WTC11 (cell line): ENCODE measurements at regions of chr12 and their contacts with region 1.

Region 1: DNA sequence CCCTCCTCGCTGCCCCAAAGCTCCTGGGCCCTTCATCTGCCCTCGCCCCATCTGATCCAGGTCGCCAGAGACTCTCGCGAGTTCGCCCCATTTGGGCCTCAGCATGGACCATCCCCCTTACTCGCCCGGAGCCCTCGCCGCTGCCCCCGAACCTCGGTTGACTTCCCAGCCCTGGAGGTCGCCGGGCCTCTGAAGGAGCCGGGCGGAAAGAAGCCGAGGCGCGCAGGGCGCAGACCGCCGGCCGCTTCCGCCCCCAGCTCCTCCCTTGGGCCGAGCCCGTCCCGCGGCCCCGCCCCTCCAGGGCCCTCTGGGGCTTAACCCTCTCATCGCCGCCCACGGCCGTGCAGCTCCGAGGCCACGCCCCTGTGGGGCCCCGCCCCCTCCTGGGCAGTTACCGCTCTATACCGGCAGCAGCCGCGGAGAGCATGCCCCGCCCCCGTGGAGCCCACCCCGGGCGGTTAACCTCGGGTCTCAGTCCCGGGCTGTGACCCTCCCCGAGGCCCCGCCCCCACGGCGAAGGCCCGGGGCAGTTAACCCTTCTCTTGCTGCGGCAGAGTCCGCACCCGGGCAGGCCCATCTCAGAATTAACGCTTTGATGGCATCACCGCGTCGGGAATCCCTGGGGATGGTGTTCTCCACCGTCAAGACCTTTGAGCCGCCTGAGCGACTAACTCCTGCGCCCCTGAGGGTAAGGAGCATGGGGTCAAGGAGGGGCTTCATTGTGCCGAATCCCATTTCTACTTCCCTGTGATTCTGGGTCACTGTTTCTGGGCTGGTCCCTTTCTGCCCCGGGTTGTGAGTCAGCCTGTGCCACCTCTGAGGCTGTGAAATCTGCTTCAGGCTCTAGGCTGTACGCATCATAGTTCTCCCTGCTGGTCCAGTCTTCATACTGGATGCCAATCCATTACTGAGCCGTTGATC is at the start of gene SPSB2:
- DNase-seq: peak; percentile 100
- ATAC-seq: peak; percentile 75
- H3K4me3 Mint-ChIP-seq: peak within 1 kb of the TSS; percentile 89
- H3K27ac Mint-ChIP-seq: peak within 1 kb of the TSS; percentile 96
- H3K4me1 Mint-ChIP-seq: peaks cover 44% of the 10 kb centered on the region
- H3K27me3 Mint-ChIP-seq: no peaks in the 10 kb centered on the region
- CTCF ChIP-seq: no peak
- total RNA-seq, gene SPSB2: 21.2 to 25.5 TPM (median 22.7 TPM) in 3 replicates

Region 2: GRCh38 chr12:6752921-6753771 is 120.2 kb before region 1 on chr12 and contains the start of gene MLF2:
- CTCF ChIA-PET with region 1: interaction called, 20 read pairs
- POLR2A ChIA-PET with region 1: interaction called, 4 read pairs
- DNase-seq: peak; percentile 99
- ATAC-seq: peak; percentile 95
- H3K4me3 Mint-ChIP-seq: peak within 1 kb of the TSS; percentile 92
- H3K27ac Mint-ChIP-seq: peak within 1 kb of the TSS; percentile 99
- H3K4me1 Mint-ChIP-seq: peaks cover 25% of the 10 kb centered on the region
- H3K27me3 Mint-ChIP-seq: no peaks in the 10 kb centered on the region
- CTCF ChIP-seq: peak; percentile 89; the same call in 1 of the 2 replicates
- total RNA-seq, gene MLF2: 226 to 236 TPM (median 229 TPM) in 3 replicates

Region 3: DNA sequence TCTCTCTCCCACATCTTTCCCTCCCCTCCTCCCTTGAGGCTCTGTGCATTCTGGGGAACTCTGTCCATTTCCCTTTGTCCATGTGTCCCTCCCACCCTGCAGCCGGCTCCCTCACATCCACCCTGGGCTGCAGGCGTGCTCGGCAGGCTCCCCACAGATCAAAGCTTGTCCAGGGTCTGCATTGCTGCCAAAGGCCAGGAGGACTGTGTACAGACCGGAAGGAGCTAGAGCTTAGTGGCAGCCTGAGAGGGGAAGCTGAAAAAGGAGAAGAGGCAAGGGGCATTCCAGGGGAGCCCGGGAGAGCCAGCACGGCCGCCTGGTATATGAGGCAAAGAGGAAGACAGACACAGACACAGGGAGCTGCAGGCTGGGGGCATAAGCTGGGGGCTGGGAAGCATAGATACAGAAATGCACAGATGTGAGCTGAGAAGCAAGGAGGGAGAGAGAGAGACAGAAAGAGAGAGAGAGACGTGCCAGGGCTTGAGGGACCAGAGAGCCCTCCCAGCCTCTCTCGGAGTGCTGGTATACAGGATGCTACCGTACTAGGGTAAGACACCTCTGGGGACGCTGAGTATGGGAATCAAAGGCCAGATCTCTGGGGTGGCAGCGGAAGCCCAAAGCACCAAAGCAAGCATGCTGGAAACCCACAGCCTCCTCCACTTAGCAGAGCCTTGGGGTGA is 80.7 kb before region 1 on chr12:
- CTCF ChIA-PET with region 1: no interaction called
- POLR2A ChIA-PET with region 1: no interaction called
- DNase-seq: no peak
- ATAC-seq: peak; percentile 11; the same call in 1 of the 2 replicates
- H3K4me3 Mint-ChIP-seq: no peak overlapping the region
- H3K27ac Mint-ChIP-seq: no peak overlapping the region
- H3K4me1 Mint-ChIP-seq: peaks cover 16% of the 10 kb centered on the region
- H3K27me3 Mint-ChIP-seq: peaks cover 25% of the 10 kb centered on the region
- CTCF ChIP-seq: no peak

Region 4: GRCh38 chr12:6807170-6807569 is 66.2 kb before region 1 on chr12:
- CTCF ChIA-PET with region 1: no interaction called
- POLR2A ChIA-PET with region 1: no interaction called
- DNase-seq: no peak
- ATAC-seq: no peak
- H3K4me3 Mint-ChIP-seq: no peak overlapping the region
- H3K27ac Mint-ChIP-seq: no peak overlapping the region
- H3K4me1 Mint-ChIP-seq: peaks cover 18% of the 10 kb centered on the region
- H3K27me3 Mint-ChIP-seq: peaks cover 32% of the 10 kb centered on the region
- CTCF ChIP-seq: no peak

Region 5: GRCh38 chr12:6851921-6852650 is 21.3 kb before region 1 on chr12 and contains the start of gene USP5:
- CTCF ChIA-PET with region 1: interaction called, 181 read pairs
- POLR2A ChIA-PET with region 1: interaction called, 33 read pairs
- DNase-seq: peak; percentile 99
- ATAC-seq: peak; percentile 79
- H3K4me3 Mint-ChIP-seq: peak within 1 kb of the TSS; percentile 95
- H3K27ac Mint-ChIP-seq: peak within 1 kb of the TSS; percentile 100
- H3K4me1 Mint-ChIP-seq: peaks cover 19% of the 10 kb centered on the region
- H3K27me3 Mint-ChIP-seq: no peaks in the 10 kb centered on the region
- CTCF ChIP-seq: no peak
- total RNA-seq, gene USP5: 141 to 158 TPM (median 149 TPM) in 3 replicates

Region 6: DNA sequence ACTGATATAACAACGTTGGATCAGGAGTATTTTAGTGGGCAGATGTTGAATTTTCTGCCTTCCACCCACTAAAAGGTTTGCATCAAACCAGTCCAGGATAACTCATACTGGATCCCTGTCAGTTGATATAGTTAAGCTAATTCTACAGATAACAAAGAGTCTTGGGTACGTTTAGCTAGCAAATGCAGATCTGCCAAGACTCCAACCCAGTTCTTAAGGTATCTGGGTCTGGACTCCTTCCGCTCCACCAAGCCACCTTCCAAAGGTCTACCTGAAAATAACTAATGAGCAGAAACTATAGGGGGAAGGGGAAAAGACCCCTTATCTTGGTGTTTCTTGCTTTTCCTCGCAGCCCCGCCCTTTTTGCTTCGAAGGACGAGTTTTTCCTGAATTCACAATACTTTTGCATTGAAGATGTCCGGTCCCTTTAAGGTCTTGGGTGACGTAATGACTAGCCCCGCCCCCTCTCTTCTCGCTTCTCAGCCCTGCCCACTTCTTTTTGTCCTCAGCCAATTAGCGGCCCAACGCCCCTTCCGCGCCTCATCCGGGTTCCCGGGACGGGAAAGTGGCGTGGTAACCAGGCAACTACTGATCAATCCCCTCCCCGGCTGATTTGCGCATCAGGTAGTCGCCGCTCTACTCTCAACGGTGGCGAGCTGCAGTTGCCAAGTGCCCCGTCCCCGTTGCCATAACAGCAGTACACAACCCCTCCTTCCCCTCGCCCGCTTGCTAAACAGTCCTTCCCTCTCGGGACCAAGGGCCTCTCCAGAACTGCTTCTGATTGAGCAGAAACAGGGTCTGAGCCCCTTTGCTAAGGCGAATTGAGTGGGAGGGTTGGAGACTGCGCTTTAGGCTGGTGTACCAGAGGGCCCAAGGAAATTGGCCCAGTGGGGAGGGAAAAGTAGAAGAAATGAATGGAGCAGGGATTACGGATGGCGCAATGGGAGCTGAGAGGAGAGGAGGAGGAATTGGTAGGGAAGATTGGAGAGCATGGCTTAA is 31.2 kb after region 1 on chr12 and contains the start of gene LRRC23:
- CTCF ChIA-PET with region 1: interaction called, 45 read pairs
- POLR2A ChIA-PET with region 1: interaction called, 12 read pairs
- DNase-seq: peak; percentile 100
- ATAC-seq: peak; percentile 96
- H3K4me3 Mint-ChIP-seq: no peak within 1 kb of the TSS
- H3K27ac Mint-ChIP-seq: no peak within 1 kb of the TSS; the same call in 1 of the 2 replicates
- H3K4me1 Mint-ChIP-seq: peaks cover 10% of the 10 kb centered on the region
- H3K27me3 Mint-ChIP-seq: peaks cover 6% of the 10 kb centered on the region; the same call in 1 of the 2 replicates
- CTCF ChIP-seq: no peak
- total RNA-seq, gene LRRC23: 3.1 to 5.3 TPM (median 4.9 TPM) in 3 replicates

Region 7: DNA sequence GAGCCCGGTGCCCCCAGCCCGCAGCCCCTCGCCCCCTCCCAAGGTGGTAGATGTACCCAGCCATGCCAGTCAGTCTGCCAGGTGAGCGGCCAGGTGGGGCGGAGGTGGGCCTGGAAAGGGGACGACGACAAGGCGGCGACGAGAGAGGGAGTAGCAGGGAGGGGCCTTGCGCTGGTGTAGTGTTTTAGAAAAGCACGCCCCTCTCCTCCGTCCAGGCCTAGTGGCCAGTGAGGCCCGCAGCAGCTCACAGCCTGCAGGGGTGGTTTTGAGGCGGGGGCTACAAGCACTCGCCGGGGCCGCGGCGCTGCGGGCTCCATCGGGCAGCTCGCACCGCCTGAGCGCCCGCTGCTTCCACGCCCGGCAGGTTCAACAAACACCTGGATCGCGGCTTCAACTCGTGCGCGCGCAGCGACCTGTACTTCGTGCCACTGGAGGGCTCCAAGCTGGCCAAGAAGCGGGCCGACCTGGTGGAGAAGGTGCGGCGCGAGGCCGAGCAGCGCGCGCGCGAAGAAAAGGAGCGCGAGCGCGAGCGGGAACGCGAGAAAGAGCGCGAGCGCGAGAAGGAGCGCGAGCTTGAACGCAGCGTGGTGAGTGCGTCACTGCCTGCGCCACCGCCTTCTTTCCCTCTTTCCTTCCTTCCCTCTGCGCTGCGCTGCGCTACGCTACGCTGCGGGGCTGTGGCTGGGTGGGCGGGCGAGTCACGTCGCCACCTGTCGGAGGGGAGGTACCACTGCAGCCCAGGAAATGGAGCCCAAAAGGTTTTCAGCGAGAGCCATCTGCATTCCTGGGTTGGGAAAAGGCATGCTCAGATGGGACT is 64.3 kb after region 1 on chr12:
- CTCF ChIA-PET with region 1: interaction called, 53 read pairs
- POLR2A ChIA-PET with region 1: interaction called, 14 read pairs
- DNase-seq: peak; percentile 94
- ATAC-seq: peak; percentile 83
- H3K4me3 Mint-ChIP-seq: peak overlapping the region; percentile 69
- H3K27ac Mint-ChIP-seq: peak overlapping the region; percentile 93
- H3K4me1 Mint-ChIP-seq: peaks cover 29% of the 10 kb centered on the region
- H3K27me3 Mint-ChIP-seq: no peaks in the 10 kb centered on the region
- CTCF ChIP-seq: peak; percentile 92

Region 8: GRCh38 chr12:7047306-7047705 is 174.0 kb after region 1 on chr12:
- CTCF ChIA-PET with region 1: no interaction called
- POLR2A ChIA-PET with region 1: no interaction called
- DNase-seq: no peak
- ATAC-seq: no peak
- H3K4me3 Mint-ChIP-seq: no peak overlapping the region
- H3K27ac Mint-ChIP-seq: no peak overlapping the region
- H3K4me1 Mint-ChIP-seq: no peaks in the 10 kb centered on the region
- H3K27me3 Mint-ChIP-seq: peaks cover 6% of the 10 kb centered on the region; the same call in 1 of the 2 replicates
- CTCF ChIP-seq: no peak

Region 9: GRCh38 chr12:7092229-7092985 is 219.1 kb after region 1 on chr12 and contains the start of gene C1R:
- CTCF ChIA-PET with region 1: no interaction called
- POLR2A ChIA-PET with region 1: no interaction called
- DNase-seq: peak; percentile 76
- ATAC-seq: peak; percentile 49
- H3K4me3 Mint-ChIP-seq: peak within 1 kb of the TSS; percentile 65
- H3K27ac Mint-ChIP-seq: peak within 1 kb of the TSS; percentile 79; the same call in 1 of the 2 replicates
- H3K4me1 Mint-ChIP-seq: peaks cover 34% of the 10 kb centered on the region
- H3K27me3 Mint-ChIP-seq: no peaks in the 10 kb centered on the region; the same call in none of the 2 replicates
- CTCF ChIP-seq: peak; percentile 82
- total RNA-seq, gene C1R: 8.4 to 9.8 TPM (median 8.9 TPM) in 3 replicates

Region 10: DNA sequence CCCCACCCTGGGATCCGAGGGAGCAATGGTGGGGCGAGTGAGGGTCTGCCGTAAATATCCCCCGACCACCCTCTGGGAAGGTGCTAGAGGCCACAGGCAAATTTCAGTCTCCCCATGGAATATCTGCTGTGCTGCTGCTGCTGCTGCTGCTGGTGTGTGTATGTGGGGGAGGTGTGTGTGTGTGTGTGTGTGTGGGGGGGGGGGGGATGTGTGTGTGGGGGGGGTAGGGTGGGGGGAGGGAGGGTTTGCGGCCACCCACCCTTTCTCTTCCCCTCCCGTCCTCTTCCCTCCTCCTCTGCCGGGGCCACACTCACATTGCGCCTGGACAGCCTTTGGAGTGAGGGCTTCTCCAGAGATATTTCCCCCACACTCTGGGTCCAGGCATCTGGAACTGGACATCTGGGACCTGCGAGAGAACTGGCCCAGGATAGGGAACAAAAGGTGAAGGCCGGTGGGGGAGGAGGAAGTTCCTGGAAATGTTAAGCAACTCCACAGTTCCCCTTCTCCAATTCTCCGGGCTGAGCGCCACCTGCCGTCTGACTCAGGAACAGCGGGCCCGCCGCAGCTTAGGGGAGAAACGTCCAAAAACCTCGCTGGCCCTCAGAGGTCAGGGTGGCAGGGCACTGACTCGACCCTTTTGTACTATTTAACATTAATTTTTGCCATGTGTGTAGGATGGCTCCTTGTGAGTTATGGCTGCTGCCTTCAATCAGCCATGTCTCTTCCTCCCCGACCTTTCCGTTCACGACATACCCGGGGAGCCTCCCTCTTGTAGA is 235.6 kb after region 1 on chr12 and contains the start of gene C1RL:
- CTCF ChIA-PET with region 1: interaction called, 10 read pairs
- POLR2A ChIA-PET with region 1: interaction called, 3 read pairs
- DNase-seq: peak; percentile 95
- ATAC-seq: peak; percentile 60
- H3K4me3 Mint-ChIP-seq: peak within 1 kb of the TSS; percentile 89
- H3K27ac Mint-ChIP-seq: peak within 1 kb of the TSS; percentile 78
- H3K4me1 Mint-ChIP-seq: peaks cover 12% of the 10 kb centered on the region
- H3K27me3 Mint-ChIP-seq: no peaks in the 10 kb centered on the region
- CTCF ChIP-seq: peak; percentile 92
- total RNA-seq, gene C1RL: 17.7 to 23.7 TPM (median 22.9 TPM) in 3 replicates